ENCODE measurements at regions of chr6 and their contacts with region 1.

Region 1: GRCh38 chr6:13422681-13423221 is 64.6 kb downstream of the GFOD1 start:
- DNase-seq: peak; percentile 92
- H3K4me3 ChIP-seq: no peak overlapping the region
- H3K27ac ChIP-seq: peak overlapping the region; percentile 87
- H3K4me1 ChIP-seq: peaks cover 41% of the 10 kb centered on the region
- H3K27me3 ChIP-seq: no peaks in the 10 kb centered on the region
- CTCF ChIP-seq: no peak

Region 2: GRCh38 chr6:13239530-13240455 is 183.0 kb before region 1 on chr6:
- CTCF ChIA-PET with region 1: no interaction called
- POLR2A ChIA-PET with region 1: no interaction called
- intact Hi-C with region 1: no loop called
- DNase-seq: no peak
- H3K4me3 ChIP-seq: no peak overlapping the region
- H3K27ac ChIP-seq: no peak overlapping the region
- H3K4me1 ChIP-seq: no peaks in the 10 kb centered on the region
- H3K27me3 ChIP-seq: no peaks in the 10 kb centered on the region
- CTCF ChIP-seq: no peak

Region 3: DNA sequence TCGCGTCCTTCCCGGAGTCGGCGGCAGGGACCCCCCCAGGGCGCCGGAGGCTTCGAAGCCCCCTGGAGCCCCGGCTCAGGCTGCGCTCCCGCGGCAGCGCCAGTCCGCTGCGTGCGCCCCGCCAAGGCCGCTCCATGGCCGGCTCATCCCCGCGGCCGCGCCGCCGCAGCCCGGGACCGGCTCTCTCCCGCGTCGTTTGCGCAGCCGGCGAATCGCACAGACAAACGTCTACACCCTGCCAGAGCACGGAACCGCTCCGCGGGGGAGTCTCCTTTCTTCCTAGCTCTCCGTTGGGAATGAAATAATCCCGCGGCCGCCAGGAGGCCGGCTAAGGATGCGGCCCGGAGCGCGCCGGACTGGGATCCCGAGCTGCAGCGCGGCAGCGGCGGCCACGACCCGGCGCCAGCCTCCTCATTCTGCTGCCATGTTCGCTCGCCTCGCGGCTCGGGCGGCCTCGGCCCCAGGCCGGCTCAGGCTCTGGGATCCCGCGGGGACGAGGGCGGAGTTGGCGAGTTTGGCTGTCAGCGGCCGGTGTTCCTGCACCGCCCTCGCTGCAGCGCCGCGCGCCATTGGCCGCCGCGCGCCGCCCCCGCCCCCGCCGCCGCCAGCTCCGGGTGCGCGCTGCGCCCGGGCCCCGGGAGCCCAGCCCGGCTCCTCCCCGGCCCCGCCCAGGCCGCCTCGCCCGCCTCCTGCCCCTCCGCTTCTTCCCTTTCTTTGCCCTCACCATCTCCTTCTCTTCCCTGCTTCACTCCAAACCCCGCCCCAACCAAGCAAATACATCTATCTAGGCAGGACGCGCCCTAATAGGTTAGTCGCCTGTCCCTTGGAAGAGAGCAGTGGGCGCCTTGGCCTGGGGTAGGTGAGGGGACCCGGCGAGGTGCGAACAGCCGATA is 64.6 kb after region 1 on chr6 and contains the start of gene GFOD1:
- CTCF ChIA-PET with region 1: no interaction called
- POLR2A ChIA-PET with region 1: no interaction called
- intact Hi-C with region 1: loop called (anchors 5 kb)
- DNase-seq: peak; percentile 93
- H3K4me3 ChIP-seq: peak within 1 kb of the TSS; percentile 69
- H3K27ac ChIP-seq: peak within 1 kb of the TSS; percentile 59
- H3K4me1 ChIP-seq: peaks cover 15% of the 10 kb centered on the region
- H3K27me3 ChIP-seq: no peaks in the 10 kb centered on the region
- CTCF ChIP-seq: no peak
- total RNA-seq, gene GFOD1: 7.5 and 8.8 TPM in 2 replicates

Region 4: DNA sequence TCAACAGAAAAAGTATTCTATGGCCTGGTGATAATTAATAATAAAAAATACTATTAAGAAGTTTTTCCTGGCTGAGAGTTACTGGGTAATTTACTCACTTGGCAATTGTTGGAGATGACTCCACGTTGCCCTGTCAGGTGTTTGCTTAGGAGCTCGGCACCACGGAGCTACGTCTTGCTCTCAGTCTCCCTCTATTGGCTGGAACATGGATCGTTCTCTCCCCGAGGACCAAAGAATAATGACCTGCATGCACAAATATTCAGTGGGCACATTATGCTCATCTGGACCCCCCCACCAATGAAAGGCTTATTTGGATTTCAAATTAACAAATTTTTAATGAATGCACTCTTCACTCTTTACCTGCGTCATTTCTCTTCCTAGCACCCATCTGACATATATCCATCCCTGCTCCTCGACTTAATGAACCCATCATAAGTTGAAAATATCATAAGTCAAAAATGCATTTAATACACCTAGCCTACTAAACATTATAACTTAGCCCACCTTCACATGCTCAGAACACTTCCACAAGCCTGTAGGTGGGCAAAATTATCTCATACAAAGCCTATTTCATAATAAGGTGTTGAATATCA is 623.8 kb after region 1 on chr6:
- CTCF ChIA-PET with region 1: no interaction called
- POLR2A ChIA-PET with region 1: no interaction called
- intact Hi-C with region 1: no loop called
- DNase-seq: peak; percentile 66
- H3K4me3 ChIP-seq: no peak overlapping the region
- H3K27ac ChIP-seq: no peak overlapping the region
- H3K4me1 ChIP-seq: peaks cover 3% of the 10 kb centered on the region
- H3K27me3 ChIP-seq: no peaks in the 10 kb centered on the region
- CTCF ChIP-seq: peak; percentile 83

Measured in A673 (cell line).